Sciatic nerve (tissue), 2 donors: ENCODE measurements at regions of chr5 and their contacts with region 1.

Region 1: GRCh38 chr5:172415362-172416275 is 38.7 kb downstream of the SH3PXD2B start:
- DNase-seq: no peak
- ATAC-seq: no peak

Region 2: DNA sequence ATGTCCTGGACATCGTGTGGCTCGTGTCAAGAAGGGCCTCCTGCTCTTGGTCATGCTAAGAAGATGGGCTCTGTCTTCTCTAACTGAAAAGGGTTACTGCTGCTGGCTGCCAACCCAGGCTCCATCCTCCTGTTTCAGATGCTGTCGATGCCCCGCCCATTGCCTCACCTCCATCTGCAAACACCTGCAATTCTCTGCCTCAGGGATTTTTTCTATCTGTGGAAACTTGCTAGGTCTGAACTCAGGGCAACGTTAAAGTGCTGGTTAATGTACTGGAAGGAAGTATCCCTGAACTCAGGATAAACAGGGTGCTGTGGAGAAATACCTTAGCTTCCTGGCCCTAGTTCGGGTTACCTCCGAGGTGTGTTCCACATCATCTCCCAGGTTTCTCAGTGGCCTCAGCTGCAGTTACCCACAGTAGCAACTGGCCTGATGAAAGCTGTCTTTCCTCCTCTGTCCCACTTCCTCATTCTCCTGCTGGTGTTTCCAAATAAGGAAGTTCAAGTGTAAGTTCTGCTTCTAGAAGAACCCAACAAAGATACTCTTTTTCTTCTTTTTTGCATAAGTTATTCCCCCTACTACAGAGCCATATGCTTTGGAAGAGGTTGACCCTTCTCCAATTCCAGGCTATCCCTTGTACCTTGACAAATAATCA is 781.7 kb before region 1 on chr5:
- intact Hi-C with region 1: no loop called
- DNase-seq: no peak
- ATAC-seq: peak; percentile 39

Region 3: DNA sequence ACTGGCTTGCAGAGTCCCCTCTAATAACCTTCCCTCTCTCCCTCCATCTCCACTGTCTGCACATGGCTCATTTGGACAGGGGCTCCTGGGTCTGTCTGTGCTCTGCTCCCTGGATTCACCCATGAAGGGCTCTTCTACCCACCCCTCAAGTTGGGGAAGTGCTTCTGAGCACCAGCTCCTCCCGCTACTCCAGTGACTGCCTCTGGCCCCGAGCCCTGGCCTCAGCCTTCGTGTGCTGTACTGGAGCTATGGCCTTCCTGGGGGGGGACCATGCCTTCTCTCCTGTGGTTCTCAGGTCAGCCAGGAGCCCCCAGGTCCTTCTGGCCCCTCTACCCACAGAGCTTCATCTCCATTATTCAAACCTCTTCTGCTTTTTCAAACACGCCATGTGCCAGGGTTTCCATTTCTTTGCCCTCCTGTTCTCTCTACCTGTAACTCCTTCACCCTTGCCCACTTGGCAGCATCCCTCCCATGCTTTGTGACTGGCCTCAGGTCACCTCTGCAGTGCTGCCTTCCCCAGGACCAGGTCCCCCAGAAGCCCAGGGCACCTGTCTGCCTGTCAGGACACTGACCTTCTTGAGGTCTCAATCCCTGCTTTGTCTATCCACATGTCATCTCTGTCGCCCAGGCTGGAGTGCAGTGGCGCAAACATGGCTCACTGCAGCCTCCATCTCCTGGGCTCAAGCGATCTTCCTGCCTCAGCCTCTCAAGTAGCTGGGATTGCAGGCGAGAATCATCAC is 29.2 kb after region 1 on chr5:
- intact Hi-C with region 1: loop called (anchors 1 kb)
- DNase-seq: no peak
- ATAC-seq: no peak

Region 4: DNA sequence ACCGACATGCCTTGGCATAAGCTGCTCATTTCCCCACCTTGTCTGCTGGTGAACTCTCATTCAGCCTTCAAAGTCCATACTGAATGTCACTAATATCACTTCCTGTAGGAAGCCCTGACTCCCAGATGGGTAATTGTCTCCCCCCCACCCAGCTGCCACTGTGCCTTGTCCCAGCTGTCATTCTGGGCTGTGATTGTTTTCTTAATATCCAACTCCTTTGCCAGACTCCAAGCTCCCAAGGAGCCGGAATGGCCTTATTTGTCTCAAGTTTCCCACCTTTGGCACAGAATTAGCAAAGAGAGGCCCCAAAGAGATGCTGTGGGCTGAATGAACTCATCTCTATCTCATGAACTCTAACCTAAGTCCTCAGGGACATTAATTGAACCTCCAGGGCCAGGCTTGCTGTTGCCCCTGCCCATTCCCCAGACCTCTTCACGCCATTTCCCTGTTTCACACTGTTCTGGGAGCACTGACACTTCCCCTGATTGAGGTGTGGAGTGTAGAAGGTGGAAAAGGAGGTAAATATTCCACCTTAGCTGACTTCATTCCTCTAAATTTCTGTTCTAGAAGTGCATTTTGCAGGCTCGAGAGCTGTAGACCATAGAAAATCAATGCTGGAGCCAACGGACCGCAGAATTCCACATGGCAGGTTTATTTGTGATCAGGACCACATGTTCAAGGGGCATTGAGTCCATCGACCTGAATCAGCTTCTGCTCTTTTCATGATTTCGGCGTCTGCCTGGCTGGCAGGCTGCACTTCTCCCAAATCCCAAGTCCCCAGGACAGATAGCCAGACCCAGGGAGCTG is 43.6 kb after region 1 on chr5:
- intact Hi-C with region 1: no loop called
- DNase-seq: no peak
- ATAC-seq: no peak